PC-9 (cell line): ENCODE measurements at regions of chr11 and their contacts with region 1.

Region 1: GRCh38 chr11:45899448-45900173 is 7.5 kb downstream of the FREY1 start:
- DNase-seq: peak; percentile 76 to 91
- H3K4me3 ChIP-seq: peak overlapping the region; percentile 60
- H3K27ac ChIP-seq: no peak overlapping the region
- H3K4me1 ChIP-seq: peaks cover 13% of the 10 kb centered on the region
- H3K27me3 ChIP-seq: no peaks in the 10 kb centered on the region
- CTCF ChIP-seq: no peak

Region 2: DNA sequence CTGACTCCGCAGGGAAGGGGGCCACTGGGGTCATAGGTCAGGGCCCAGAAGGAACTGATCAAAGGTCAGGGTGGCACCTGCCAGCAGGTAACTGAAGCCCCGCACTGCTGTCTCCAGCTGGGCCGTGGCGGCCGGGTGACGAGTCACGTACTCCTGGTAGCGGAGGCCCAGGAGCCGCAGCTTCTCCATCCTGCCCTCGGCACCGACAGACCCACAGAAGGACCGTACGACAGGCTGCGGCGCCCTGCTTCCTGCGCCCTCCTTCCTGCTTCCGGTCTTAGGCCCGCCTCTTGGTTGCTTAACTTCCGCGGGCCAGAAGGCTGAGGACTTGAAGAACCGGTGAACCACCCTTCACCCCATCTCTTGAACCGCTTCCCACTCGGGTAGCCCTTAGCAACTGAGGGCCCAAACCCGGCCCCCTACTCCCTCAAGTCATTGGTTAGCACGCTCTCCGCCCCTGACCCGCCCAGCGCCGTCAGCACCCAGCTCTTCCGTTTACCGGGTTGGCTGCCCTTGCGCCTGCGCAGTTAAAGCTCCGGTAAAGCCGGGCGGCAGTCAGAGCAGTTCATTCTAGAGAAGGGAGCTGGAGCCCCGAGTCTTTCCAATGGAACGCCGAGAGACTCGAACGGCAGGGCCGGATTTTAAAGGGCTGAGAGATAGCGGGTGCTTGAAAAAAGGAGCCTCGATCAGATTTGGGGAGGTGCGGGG is 18.2 kb after region 1 on chr11 and contains the start of gene PEX16:
- CTCF ChIA-PET with region 1: no interaction called
- POLR2A ChIA-PET with region 1: interaction called, 3 read pairs
- intact Hi-C with region 1: loop called (anchors 1 kb)
- DNase-seq: peak; percentile 98 to 99
- H3K4me3 ChIP-seq: peak within 1 kb of the TSS; percentile 96
- H3K27ac ChIP-seq: peak within 1 kb of the TSS; percentile 51
- H3K4me1 ChIP-seq: peaks cover 9% of the 10 kb centered on the region; the same call in 1 of the 2 replicates
- H3K27me3 ChIP-seq: no peaks in the 10 kb centered on the region
- CTCF ChIP-seq: no peak
- total RNA-seq, gene PEX16: 35.8 and 48.6 TPM in 2 replicates

Region 3: DNA sequence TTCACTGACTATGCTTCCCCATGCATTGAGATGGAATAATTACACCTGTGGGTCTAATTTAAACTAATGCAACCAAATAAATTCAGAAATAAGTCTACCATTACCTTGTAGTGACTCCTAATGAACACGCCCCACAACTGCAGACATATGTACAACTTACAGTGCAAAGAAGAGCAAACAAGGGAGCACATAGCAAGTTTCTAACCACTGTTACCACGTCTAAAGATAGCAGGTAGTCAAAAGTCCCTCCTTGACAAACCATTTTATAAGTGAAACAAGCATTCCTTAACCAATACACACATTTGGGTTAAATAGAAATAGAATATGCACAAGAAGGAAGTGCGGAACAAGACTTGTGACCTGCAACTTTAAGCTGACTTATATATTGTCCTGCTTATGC is 201.1 kb after region 1 on chr11:
- CTCF ChIA-PET with region 1: no interaction called
- POLR2A ChIA-PET with region 1: no interaction called
- intact Hi-C with region 1: no loop called
- DNase-seq: no peak
- H3K4me3 ChIP-seq: no peak overlapping the region
- H3K27ac ChIP-seq: no peak overlapping the region
- H3K4me1 ChIP-seq: no peaks in the 10 kb centered on the region
- H3K27me3 ChIP-seq: no peaks in the 10 kb centered on the region
- CTCF ChIP-seq: no peak